Activated B cell treated with CpG ODN at 0.5 μM for 24 hours (primary cell): ENCODE measurements at regions of chr16 and their contacts with region 1.

Region 1: GRCh38 chr16:24010440-24011089 is 174.8 kb downstream of the PRKCB start:
- DNase-seq: peak; percentile 52
- ATAC-seq: peak; percentile 12
- H3K4me3 Mint-ChIP-seq: peak overlapping the region; percentile 65
- H3K27ac Mint-ChIP-seq: peak overlapping the region; percentile 72
- H3K4me1 Mint-ChIP-seq: peaks cover 98% of the 10 kb centered on the region
- H3K27me3 Mint-ChIP-seq: no peaks in the 10 kb centered on the region
- CTCF ChIP-seq: peak; percentile 39

Region 2: DNA sequence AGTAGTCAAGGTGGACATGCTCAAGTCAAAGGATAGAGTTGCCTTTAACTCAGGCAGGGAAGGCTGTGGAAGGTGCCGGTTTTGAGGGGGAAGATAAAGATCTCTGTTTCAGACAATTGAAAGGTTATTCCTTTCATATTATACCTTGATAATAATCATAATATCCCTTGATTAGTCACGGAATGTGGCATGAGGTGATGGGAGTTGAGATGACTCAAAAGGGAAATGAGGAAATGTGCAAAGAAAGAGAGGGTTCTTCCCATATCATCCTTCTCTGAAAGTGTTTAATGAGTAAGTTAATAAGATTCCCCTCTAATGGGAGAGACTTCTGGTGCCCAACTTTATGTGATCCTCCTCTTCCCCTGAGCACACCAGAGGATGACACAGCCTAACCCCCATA is 1239.7 kb before region 1 on chr16:
- CTCF ChIA-PET with region 1: no interaction called
- POLR2A ChIA-PET with region 1: no interaction called
- intact Hi-C with region 1: no loop called
- DNase-seq: no peak
- ATAC-seq: no peak
- H3K4me3 Mint-ChIP-seq: no peak overlapping the region
- H3K27ac Mint-ChIP-seq: no peak overlapping the region
- H3K4me1 Mint-ChIP-seq: no peaks in the 10 kb centered on the region
- H3K27me3 Mint-ChIP-seq: peaks cover 40% of the 10 kb centered on the region
- CTCF ChIP-seq: no peak

Region 3: DNA sequence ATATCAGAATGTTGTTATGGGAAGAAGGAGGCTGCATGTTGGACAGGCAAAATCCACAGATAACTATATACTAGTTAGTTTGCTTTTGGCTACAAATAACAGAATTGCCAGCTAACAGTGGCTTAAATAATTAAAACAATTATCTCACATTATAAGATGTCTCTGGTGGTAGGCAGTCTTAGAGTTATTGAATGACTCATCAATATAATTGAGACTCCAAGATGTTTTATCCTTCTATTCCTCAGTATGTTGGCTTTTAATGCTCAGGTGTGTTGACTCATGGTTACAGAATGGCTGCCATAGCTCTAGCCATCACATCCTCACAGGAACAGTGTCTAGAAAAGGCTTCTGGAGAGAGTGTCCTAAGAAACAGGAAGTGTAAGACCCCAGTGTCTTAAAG is 244.6 kb before region 1 on chr16:
- CTCF ChIA-PET with region 1: no interaction called
- POLR2A ChIA-PET with region 1: no interaction called
- intact Hi-C with region 1: no loop called
- DNase-seq: no peak
- ATAC-seq: no peak
- H3K4me3 Mint-ChIP-seq: no peak overlapping the region
- H3K27ac Mint-ChIP-seq: no peak overlapping the region
- H3K4me1 Mint-ChIP-seq: no peaks in the 10 kb centered on the region
- H3K27me3 Mint-ChIP-seq: peaks cover 6% of the 10 kb centered on the region
- CTCF ChIP-seq: no peak

Region 4: DNA sequence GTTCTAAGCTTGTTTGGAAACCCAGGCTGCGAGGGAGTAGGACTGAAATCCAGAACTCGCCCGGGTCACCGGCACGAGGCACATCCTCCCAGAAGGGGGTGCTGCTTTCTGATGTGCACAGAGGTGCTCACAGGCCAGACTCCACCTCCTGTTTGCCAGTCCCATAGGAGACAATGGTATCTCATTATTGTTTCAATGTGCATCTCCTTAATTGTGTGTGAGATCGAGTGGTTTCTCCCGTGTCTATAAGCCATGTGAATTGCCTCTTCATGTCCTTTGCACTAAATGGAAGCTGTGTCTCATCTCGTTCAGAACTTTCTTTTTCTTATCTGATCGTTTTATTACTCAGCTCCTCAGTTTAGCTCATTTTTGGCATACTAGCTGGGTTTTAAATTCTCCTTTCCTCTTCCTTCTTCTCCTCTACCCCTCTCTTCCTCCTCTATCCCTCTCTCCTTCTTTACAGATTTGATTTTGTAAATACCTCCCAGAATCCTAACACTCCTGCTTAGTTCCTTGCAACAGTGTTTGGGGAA is 206.9 kb before region 1 on chr16:
- CTCF ChIA-PET with region 1: interaction called, 325 read pairs
- POLR2A ChIA-PET with region 1: interaction called, 12 read pairs
- intact Hi-C with region 1: loop called (anchors 1 kb)
- DNase-seq: peak; percentile 48
- ATAC-seq: peak; percentile 82
- H3K4me3 Mint-ChIP-seq: peak overlapping the region; percentile 51
- H3K27ac Mint-ChIP-seq: peak overlapping the region; percentile 26
- H3K4me1 Mint-ChIP-seq: peaks cover 47% of the 10 kb centered on the region
- H3K27me3 Mint-ChIP-seq: no peaks in the 10 kb centered on the region
- CTCF ChIP-seq: no peak

Region 5: DNA sequence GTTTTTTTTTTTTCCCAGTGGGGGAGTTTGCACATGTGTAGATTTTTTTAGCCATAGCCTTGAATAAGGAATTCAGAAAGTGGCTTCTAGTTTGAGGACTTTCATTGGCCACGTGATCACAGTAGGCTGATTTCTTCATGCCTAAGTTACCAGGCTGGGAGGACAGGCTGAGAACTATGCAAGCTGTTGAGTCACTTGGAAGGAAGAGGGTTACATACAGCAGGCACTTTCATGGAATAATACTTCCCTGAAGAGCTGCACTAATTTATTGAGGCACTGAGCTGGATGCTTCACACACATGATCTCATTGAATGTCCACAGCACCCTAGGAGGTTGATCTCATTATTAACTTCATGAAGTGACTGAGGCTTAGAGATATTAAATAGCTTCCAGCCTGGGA is 152.0 kb before region 1 on chr16:
- CTCF ChIA-PET with region 1: interaction called, 22 read pairs
- POLR2A ChIA-PET with region 1: interaction called, 14 read pairs
- intact Hi-C with region 1: loop called (anchors 5 kb)
- DNase-seq: no peak
- ATAC-seq: no peak
- H3K4me3 Mint-ChIP-seq: peak overlapping the region; percentile 24
- H3K27ac Mint-ChIP-seq: peak overlapping the region; percentile 89
- H3K4me1 Mint-ChIP-seq: peaks cover 97% of the 10 kb centered on the region
- H3K27me3 Mint-ChIP-seq: no peaks in the 10 kb centered on the region
- CTCF ChIP-seq: no peak

Region 6: DNA sequence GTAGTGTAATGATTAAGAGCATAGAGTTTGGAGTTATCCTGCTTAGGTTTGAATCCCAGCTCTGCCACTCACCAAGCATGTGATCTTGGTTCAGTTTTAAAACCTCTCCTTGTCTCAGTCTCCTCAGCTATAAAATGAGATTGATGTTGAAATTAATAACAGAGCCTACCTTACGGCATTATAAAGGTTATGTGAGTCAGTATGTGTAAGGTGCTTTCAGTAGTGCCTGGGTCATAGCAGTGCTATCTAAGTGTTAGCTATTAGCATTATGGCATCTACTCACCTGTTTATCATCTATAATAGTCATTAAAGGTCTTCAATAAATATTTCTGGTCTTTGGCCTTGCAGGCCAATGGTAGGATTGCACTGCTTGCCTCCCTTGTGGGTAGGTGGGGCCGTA is 121.4 kb before region 1 on chr16:
- CTCF ChIA-PET with region 1: interaction called, 12 read pairs
- POLR2A ChIA-PET with region 1: no interaction called
- intact Hi-C with region 1: no loop called
- DNase-seq: no peak
- ATAC-seq: no peak
- H3K4me3 Mint-ChIP-seq: no peak overlapping the region
- H3K27ac Mint-ChIP-seq: no peak overlapping the region
- H3K4me1 Mint-ChIP-seq: peaks cover 89% of the 10 kb centered on the region
- H3K27me3 Mint-ChIP-seq: no peaks in the 10 kb centered on the region
- CTCF ChIP-seq: no peak

Region 7: DNA sequence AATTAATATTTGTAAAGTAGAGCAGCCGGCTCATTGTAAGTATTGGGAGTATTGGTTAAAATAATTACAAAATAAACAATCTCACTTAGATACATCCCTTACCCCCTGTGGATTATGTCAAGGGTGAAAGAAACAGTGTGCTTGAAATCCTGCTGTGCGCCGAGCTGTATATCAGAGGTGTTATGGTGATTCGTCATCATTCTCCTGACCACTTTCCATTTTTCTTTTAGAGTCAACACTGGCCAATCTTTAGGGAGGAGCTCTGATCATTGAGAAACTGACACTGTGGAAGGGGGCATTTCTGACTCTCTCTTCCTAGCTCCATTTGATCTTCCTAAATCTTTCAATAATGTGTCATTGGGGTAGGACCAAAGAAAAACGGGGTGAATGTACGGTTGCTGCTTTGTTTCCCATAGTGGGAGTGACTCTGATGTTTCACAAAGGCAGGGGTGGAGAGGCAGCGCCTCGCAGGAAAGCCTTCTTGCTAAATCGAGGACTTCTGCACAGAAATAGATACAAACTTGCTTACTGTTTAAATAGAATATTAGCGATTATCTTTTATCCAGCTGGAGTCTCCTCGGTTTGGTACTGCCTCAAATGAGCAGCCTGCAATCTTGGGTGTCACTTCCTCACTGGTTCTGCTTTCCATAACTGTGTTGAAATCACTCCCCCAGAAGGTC is 51.4 kb before region 1 on chr16:
- CTCF ChIA-PET with region 1: interaction called, 10 read pairs
- POLR2A ChIA-PET with region 1: interaction called, 5 read pairs
- intact Hi-C with region 1: loop called (anchors 2 kb)
- DNase-seq: no peak
- ATAC-seq: peak; percentile 76
- H3K4me3 Mint-ChIP-seq: peak overlapping the region; percentile 55
- H3K27ac Mint-ChIP-seq: peak overlapping the region; percentile 87
- H3K4me1 Mint-ChIP-seq: peaks cover 93% of the 10 kb centered on the region
- H3K27me3 Mint-ChIP-seq: no peaks in the 10 kb centered on the region
- CTCF ChIP-seq: no peak

Region 8: DNA sequence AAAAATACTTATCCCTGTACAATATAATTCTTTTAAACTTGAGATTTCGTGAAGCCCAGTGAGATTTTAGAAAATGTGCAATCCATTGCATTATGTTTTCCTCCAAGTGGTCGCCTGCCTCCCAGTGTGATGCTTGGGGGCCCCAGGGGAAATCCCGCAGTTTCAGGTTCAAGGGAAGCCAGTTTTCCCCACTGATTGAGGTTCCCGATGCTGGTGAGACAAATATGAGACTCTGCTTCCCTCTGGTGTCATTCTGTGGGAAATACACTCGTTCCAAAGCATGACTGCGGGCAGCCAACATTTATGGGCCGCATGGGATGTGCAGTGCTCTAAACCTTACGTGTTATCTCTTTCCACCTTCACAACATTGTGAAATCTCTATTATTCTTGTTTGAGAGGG is 26.0 kb after region 1 on chr16:
- CTCF ChIA-PET with region 1: interaction called, 36 read pairs
- POLR2A ChIA-PET with region 1: interaction called, 4 read pairs
- intact Hi-C with region 1: loop called (anchors 1 kb)
- DNase-seq: no peak
- ATAC-seq: peak; percentile 55
- H3K4me3 Mint-ChIP-seq: peak overlapping the region; percentile 15
- H3K27ac Mint-ChIP-seq: peak overlapping the region; percentile 70
- H3K4me1 Mint-ChIP-seq: peaks cover 48% of the 10 kb centered on the region
- H3K27me3 Mint-ChIP-seq: no peaks in the 10 kb centered on the region
- CTCF ChIP-seq: no peak